ENCODE measurements at regions of chr2 and their contacts with region 1.

Region 1: GRCh38 chr2:106104332-106105062 is 89.6 kb downstream of the UXS1 start:
- DNase-seq: peak; percentile 78
- CTCF ChIP-seq: peak; percentile 97

Region 2: DNA sequence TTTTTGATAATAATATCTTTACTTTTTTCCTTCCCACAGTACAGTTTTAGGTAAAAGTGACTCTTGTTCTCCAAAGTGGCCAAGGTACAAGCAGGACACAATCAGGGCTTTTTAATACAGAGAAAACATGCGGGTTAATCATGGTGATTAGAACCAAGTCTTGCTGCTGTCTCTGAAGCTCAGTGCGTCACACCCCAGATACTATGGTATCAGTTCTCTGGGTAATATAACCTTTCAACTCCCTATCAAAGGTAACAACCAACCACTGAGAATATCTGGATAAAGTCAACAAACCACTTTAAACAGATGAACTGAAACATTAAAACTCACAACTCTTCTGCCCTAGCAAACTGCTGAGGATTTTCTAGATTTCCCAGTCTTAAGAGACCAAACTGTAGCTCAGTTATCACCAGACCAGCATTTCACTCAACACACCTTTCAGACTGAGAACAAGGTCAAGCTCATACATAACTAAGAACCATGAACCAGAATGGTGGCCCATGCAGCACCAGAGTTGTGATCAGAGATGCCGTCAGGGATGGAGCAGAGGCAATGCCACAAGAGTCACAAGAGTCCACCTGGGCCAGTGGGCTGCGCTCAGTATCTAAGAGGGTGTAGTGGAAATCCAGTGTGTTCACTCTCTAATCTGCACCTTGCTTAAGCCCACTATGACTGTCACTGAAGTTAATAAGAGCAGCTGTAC is 13.4 kb before region 1 on chr2:
- CTCF ChIA-PET with region 1: interaction called, 12 read pairs
- POLR2A ChIA-PET with region 1: no interaction called
- DNase-seq: no peak
- CTCF ChIP-seq: no peak

Region 3: DNA sequence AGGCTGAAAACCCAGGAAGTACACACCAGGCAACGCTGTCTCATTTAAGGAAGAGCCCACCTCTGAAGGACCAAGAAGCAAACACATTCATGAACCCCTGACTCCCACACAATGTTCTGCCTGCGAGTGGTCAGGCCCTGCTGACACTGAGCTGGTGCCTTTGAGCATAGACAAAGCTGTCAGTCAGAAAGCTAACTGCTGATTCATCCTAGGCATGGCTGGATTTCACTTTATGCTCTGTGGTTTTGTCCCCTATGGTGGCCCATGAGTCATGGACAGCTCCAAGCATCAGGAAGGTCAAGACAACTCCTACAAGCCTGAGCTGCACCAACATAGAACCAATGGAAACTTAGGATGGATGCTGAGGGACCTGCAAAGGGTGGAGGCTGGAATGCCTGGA is 10.8 kb after region 1 on chr2:
- CTCF ChIA-PET with region 1: interaction called, 26 read pairs
- POLR2A ChIA-PET with region 1: no interaction called
- DNase-seq: peak; percentile 32
- CTCF ChIP-seq: no peak

Region 4: GRCh38 chr2:106542811-106543259 is 438.3 kb after region 1 on chr2:
- CTCF ChIA-PET with region 1: interaction called, 14 read pairs
- POLR2A ChIA-PET with region 1: no interaction called
- DNase-seq: peak; percentile 78
- CTCF ChIP-seq: peak; percentile 91